A673 (cell line): ENCODE measurements at regions of chr11 and their contacts with region 1.

Region 1: GRCh38 chr11:77446911-77447629 is 26.8 kb downstream of the PAK1 start:
- DNase-seq: no peak
- H3K4me3 ChIP-seq: no peak overlapping the region
- H3K27ac ChIP-seq: no peak overlapping the region
- H3K4me1 ChIP-seq: no peaks in the 10 kb centered on the region
- H3K27me3 ChIP-seq: no peaks in the 10 kb centered on the region
- CTCF ChIP-seq: no peak

Region 2: DNA sequence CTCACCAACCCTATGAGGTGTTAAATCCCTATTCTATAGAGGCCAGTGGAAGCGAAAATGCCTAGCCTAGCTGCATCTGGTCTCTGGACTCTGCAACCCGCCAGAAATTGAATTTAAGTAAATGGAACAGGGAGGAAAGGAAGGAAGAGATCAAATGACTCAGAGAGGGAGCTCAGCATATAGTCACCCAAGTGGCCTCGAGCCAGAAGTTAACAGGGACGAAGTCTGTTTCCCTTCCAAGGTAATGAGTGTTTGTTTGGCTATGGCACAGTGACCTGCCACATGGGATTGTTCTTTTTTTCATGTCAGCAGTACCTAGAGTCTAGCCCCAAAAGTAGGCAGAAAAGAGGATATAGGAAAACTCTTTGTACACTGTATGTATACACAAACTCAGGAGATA is 39.5 kb before region 1 on chr11:
- CTCF ChIA-PET with region 1: no interaction called
- POLR2A ChIA-PET with region 1: no interaction called
- intact Hi-C with region 1: no loop called
- DNase-seq: peak; percentile 85
- H3K4me3 ChIP-seq: no peak overlapping the region
- H3K27ac ChIP-seq: no peak overlapping the region
- H3K4me1 ChIP-seq: peaks cover 24% of the 10 kb centered on the region
- H3K27me3 ChIP-seq: no peaks in the 10 kb centered on the region
- CTCF ChIP-seq: no peak

Region 3: DNA sequence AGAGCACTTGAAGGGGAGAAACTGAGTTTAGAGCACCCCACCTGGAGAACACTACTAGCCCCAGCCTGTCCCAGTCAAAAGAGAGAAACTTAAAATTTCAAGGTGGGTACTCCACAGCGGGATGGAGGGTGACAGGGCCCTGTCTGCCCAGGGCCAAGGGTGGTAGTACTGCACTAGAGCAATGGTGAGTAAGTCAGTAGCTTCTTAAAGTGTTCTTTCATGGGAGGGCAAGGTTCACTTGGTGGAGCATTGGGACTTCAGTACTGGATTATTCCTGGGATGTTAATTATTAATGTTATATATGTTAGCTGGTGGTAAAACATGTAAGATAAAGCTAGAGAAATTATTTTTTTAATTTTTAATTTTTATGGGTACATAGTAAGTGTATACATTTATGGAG is 114.2 kb after region 1 on chr11:
- CTCF ChIA-PET with region 1: interaction called, 14 read pairs
- POLR2A ChIA-PET with region 1: no interaction called
- intact Hi-C with region 1: no loop called
- DNase-seq: no peak
- H3K4me3 ChIP-seq: no peak overlapping the region
- H3K27ac ChIP-seq: no peak overlapping the region
- H3K4me1 ChIP-seq: no peaks in the 10 kb centered on the region
- H3K27me3 ChIP-seq: no peaks in the 10 kb centered on the region
- CTCF ChIP-seq: no peak

Region 4: GRCh38 chr11:77658213-77659013 is 211.3 kb after region 1 on chr11:
- CTCF ChIA-PET with region 1: no interaction called
- POLR2A ChIA-PET with region 1: no interaction called
- intact Hi-C with region 1: no loop called
- DNase-seq: no peak
- H3K4me3 ChIP-seq: no peak overlapping the region
- H3K27ac ChIP-seq: no peak overlapping the region
- H3K4me1 ChIP-seq: no peaks in the 10 kb centered on the region
- H3K27me3 ChIP-seq: no peaks in the 10 kb centered on the region
- CTCF ChIP-seq: no peak